Right cardiac atrium (tissue), 5 donors: ENCODE measurements at regions of chr7 and their contacts with region 1.

Region 1: DNA sequence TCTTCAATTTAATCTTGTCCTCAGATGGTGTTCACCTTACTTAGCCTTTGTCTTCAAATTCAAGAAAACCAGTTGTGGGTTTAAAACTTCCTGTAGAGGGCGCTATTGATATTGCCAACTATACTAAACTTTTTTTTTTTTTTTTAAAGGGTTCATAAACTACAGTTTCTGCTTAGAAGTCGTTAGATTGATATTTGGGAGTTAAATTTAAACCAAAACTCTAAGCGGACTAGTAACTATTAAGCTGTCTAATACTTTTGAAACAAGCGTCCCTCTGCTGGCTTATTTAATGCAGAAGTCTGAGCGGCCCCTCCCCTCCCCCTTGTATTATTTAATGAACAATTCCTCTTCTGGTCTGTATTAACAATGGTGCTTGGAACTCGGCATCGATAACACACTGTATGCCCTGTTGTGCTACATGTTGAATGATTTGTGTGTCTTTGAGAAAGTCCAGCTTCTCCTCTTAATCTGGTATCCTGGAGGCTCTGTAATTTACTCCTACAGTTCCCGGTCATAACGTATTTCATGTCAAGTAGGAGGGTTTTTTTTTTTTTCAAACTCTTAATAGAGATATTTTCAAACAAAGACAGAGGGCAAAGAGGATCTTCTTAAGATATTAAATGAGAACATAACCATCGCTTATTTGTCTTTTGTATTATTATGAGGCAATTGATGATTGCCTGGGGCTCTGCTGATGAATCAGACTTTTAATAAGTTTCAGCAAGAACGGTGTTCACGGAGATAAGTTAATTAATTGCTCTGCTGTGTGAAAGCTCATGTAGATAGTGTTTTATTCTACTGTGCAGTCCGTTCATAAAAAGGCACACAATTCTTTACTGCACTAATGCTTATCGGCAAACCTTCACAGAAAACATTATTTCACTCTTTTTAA is 22.6 kb upstream of the CREB5 start:
- DNase-seq: peak in 1 of 3 donors; percentile 62
- ATAC-seq: peak in 1 of 2 donors; percentile 51
- H3K4me3 ChIP-seq: peak overlapping the region; percentile 55
- H3K27ac ChIP-seq: no peak overlapping the region
- H3K4me1 ChIP-seq: no peaks in the 10 kb centered on the region
- H3K27me3 ChIP-seq: no peaks in the 10 kb centered on the region

Region 2: DNA sequence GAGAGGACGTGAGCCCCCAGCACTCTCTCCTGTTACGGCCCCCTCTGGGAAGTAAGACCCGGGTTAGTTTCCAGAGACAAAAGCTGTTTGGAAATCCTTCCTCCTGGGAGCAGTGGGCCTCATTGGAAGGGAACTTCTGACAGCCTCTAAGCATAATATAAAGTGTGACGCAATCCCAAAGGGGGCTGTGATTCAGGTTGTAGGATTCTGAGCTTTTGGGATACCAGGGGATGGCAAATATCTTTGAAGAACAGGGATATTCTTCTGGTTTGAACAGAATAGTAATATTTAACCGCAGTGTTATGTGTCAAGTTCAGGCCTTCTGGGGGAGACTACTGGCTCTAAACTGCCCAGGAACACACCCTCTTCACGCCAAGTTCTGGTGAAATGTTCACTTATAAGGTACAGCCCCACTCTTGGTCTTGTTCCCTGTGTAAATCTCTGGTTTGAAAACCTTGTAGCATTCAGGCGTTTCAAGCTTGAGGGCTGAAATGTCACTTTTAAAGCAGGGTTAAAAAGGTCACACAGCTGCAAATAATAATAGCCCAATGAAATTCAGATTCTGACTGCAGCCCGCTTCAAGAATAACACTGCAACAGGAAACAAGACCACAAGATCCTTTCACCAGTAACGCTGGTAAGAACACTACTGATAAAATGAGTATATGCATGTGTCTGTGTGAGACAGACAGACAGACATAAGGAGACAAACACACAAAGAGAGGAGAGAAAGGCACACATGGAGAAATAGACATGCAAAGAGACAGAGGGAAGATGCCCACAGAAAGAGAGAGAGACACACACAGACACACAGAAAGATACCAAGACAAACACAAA is 91.6 kb after region 1 on chr7:
- intact Hi-C with region 1: no loop called
- DNase-seq: no peak
- ATAC-seq: peak; percentile 24 to 45
- H3K4me3 ChIP-seq: no peak overlapping the region
- H3K27ac ChIP-seq: no peak overlapping the region
- H3K4me1 ChIP-seq: no peaks in the 10 kb centered on the region
- H3K27me3 ChIP-seq: no peaks in the 10 kb centered on the region

Region 3: DNA sequence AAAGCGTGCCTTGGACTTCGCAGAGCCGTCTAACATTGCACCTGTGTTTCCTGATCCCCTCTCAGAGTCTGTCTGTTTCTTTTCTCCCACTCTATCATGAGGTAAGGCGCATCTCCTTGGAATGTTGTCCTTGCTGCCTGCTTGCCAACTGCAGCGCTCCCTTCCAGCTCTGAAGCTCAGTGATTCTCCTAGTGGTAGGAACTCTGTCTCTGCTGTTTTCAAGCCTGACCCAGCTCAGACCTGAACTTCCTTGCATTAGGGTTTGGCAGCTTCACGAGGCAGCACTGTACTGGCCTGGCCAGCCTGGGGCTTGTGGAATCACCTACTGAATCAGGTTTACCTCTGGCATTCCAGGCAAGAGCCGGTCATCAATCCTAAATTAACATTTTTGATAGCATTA is 146.5 kb after region 1 on chr7:
- intact Hi-C with region 1: loop called in 1 of 4 experiments (anchors 10 kb)
- DNase-seq: peak in 1 of 3 donors; percentile 48
- ATAC-seq: no peak
- H3K4me3 ChIP-seq: no peak overlapping the region
- H3K27ac ChIP-seq: no peak overlapping the region
- H3K4me1 ChIP-seq: peaks cover 6% of the 10 kb centered on the region
- H3K27me3 ChIP-seq: no peaks in the 10 kb centered on the region

Region 4: DNA sequence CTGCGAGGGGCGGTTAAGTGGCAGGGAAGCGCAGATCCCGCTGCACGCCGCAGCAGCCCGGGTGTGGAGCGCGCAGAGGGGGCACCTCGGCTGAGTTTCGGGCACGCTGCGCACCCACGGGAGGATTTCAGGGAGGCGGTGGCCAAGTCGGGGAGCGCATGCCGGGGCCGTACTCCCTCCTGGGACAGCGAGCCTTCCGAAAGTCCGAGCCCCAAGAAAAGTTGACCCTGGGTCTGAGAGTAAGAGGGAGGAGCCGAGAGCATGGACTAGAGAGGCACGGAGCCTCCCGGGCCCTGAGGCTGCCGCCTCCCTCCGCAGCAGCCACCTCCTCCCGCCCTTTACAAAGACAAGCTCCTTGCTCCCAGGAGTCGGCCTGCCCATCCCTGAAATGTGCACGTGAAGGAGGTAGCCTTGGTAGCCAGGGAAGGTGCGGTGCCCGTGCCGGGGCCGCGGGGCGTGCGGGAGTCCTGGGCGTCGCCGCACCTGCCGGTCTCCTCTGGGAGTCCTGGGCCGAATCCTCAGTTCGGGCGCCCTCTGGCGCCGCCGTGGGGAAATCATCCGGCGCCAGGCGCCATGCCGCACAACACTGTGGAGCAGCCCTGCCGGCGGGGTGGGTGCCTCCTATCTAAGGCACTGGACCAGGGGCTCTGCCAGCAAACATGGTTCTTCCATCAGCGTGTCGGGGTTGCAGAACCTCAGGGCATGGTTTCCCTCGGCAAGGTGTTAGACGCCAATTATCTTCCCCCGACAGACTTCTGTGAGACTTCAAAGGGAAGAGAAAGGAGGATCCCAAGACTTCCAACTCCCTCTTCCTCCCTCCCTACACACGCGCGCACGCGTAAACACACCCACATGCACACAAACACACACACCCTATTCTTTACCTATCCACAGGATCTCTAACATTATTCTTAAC is 464.3 kb after region 1 on chr7:
- intact Hi-C with region 1: loop called (anchors 5 to 10 kb)
- DNase-seq: peak; percentile 80 to 93 (median 92)
- ATAC-seq: peak; percentile 98 to 99
- H3K4me3 ChIP-seq: peak overlapping the region; percentile 66
- H3K27ac ChIP-seq: no peak overlapping the region
- H3K4me1 ChIP-seq: no peaks in the 10 kb centered on the region
- H3K27me3 ChIP-seq: no peaks in the 10 kb centered on the region